HepG2 (cell line): ENCODE measurements at regions of chr3 and their contacts with region 1.

Region 1: DNA sequence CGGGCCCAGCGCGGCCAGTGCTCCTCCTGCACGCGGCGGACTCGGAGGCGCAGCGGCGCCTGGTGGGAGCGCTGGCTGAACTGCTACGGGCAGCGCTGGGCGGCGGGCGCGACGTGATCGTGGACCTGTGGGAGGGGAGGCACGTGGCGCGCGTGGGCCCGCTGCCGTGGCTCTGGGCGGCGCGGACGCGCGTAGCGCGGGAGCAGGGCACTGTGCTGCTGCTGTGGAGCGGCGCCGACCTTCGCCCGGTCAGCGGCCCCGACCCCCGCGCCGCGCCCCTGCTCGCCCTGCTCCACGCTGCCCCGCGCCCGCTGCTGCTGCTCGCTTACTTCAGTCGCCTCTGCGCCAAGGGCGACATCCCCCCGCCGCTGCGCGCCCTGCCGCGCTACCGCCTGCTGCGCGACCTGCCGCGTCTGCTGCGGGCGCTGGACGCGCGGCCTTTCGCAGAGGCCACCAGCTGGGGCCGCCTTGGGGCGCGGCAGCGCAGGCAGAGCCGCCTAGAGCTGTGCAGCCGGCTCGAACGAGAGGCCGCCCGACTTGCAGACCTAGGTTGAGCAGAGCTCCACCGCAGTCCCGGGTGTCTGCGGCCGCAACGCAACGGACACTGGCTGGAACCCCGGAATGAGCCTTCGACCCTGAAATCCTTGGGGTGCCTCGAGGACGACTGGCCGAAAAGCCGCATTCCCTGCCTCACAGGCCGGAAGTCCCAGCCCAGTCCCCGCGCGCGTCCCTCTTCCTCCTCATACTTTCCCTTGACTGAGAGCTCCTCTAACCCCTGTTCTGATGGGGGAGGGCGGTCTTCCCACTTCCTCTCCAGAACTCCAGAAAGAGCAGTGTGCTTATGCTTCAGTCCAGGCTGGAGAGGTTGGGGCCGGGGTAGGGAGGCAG is 1.4 kb upstream of the IL17RC start:
- DNase-seq: peak; percentile 36
- ATAC-seq: peak; percentile 52
- H3K4me3 ChIP-seq: peak overlapping the region; percentile 55 to 86 (median 83); a peak in 5 of 6 replicates
- H3K27ac ChIP-seq: peak overlapping the region; percentile 90
- H3K4me1 ChIP-seq: peaks cover 38% of the 10 kb centered on the region
- H3K27me3 ChIP-seq: no peaks in the 10 kb centered on the region
- CTCF ChIP-seq: peak; percentile 53; the same call in 1 of the 2 replicates
- EP300 ChIP-seq: no peak
- POLR2A ChIP-seq: no peak; a peak in 1 of 4 replicates
- RAD21 ChIP-seq: peak; percentile 89

Region 2: GRCh38 chr3:9897408-9898372 is 17.8 kb before region 1 on chr3:
- CTCF ChIA-PET with region 1: no interaction called
- POLR2A ChIA-PET with region 1: interaction called, 298 read pairs
- in situ Hi-C with region 1: no loop called
- intact Hi-C with region 1: loop called (anchors 2 kb)
- DNase-seq: peak; percentile 98
- ATAC-seq: peak; percentile 80
- H3K4me3 ChIP-seq: peak overlapping the region in 2 of 3 experiments; percentile 34 to 67; a peak in 3 of 6 replicates
- H3K27ac ChIP-seq: peak overlapping the region; percentile 100
- H3K4me1 ChIP-seq: peaks cover 79% of the 10 kb centered on the region
- H3K27me3 ChIP-seq: no peaks in the 10 kb centered on the region; a peak in 1 of 5 replicates
- CTCF ChIP-seq: no peak
- EP300 ChIP-seq: peak in 1 of 2 experiments; percentile 48; a peak in 3 of 4 replicates
- POLR2A ChIP-seq: peak; percentile 66 to 88
- RAD21 ChIP-seq: no peak